HepG2 (cell line): ENCODE measurements at regions of chr9 and their contacts with region 1.

Region 1: GRCh38 chr9:103168254-103168653 is 173.1 kb downstream of the CYLC2 start:
- DNase-seq: no peak
- ATAC-seq: no peak
- H3K4me3 ChIP-seq: no peak overlapping the region
- H3K27ac ChIP-seq: no peak overlapping the region
- H3K4me1 ChIP-seq: no peaks in the 10 kb centered on the region
- H3K27me3 ChIP-seq: no peaks in the 10 kb centered on the region
- CTCF ChIP-seq: no peak
- EP300 ChIP-seq: no peak
- POLR2A ChIP-seq: no peak
- RAD21 ChIP-seq: no peak

Region 2: GRCh38 chr9:102631559-102631958 is 536.7 kb before region 1 on chr9:
- CTCF ChIA-PET with region 1: no interaction called
- POLR2A ChIA-PET with region 1: no interaction called
- in situ Hi-C with region 1: no loop called
- intact Hi-C with region 1: loop called (anchors 5 kb)
- DNase-seq: peak; percentile 2
- ATAC-seq: no peak
- H3K4me3 ChIP-seq: no peak overlapping the region
- H3K27ac ChIP-seq: no peak overlapping the region
- H3K4me1 ChIP-seq: no peaks in the 10 kb centered on the region
- H3K27me3 ChIP-seq: no peaks in the 10 kb centered on the region
- CTCF ChIP-seq: peak; percentile 38; the same call in 1 of the 2 replicates
- EP300 ChIP-seq: no peak
- POLR2A ChIP-seq: no peak
- RAD21 ChIP-seq: no peak

Region 3: GRCh38 chr9:103483471-103484103 is 315.3 kb after region 1 on chr9:
- CTCF ChIA-PET with region 1: no interaction called
- POLR2A ChIA-PET with region 1: no interaction called
- in situ Hi-C with region 1: no loop called
- intact Hi-C with region 1: no loop called
- DNase-seq: no peak
- ATAC-seq: no peak
- H3K4me3 ChIP-seq: no peak overlapping the region
- H3K27ac ChIP-seq: no peak overlapping the region
- H3K4me1 ChIP-seq: no peaks in the 10 kb centered on the region
- H3K27me3 ChIP-seq: no peaks in the 10 kb centered on the region
- CTCF ChIP-seq: no peak
- EP300 ChIP-seq: no peak
- POLR2A ChIP-seq: no peak
- RAD21 ChIP-seq: no peak